ENCODE measurements at regions of chr11 and their contacts with region 1.

Region 1: DNA sequence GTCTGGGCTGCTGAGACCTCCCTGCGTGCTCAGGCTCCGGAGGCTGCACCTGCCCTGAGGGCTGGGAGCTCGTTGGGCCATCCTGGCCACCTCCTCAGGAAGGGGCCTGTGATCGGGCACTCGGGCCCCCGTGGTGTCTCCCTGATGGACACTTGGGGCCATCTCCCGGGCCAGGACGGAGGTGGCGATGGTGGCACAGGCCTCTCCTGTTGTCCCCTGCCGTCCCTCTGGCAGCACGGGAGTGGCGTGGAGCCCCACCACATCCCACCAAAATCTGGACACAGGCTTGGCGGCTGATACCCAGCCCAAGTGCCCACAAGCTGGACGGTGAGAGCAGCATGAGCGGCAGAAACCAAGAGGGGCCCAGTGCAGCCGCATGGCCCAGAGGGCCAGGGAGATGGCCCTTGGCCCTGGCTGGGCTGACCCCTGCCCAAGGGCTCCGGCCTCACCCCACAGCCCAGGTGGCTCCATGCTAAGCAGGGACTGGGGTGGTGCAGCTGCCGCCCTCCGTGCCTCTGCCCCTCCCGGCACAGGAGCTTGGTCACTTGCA is 15.8 kb downstream of the MOB2 start:
- DNase-seq: peak; percentile 57

Region 2: DNA sequence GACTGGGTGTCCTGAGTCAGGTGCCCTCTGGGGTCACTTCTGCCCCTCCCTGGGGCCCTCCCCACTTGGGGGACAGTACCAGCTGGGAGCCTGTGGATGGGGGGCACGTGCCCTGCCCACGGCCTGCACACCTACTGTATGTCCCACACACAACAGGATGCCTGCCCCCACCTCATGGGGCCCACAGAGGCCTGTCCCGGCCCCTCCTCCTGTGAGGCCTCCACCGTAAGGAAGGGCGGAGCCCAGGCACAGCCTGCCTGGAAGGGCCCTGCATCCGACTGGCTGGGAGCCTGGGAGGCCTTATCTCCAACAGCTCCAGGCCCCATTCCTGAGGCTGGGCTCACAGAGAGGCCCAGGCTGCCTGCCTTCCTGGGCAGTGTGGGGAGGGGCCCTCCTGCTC is 33.3 kb before region 1 on chr11:
- intact Hi-C with region 1: loop called in 1 of 2 experiments (anchors 1 kb)
- DNase-seq: no peak